IMR-90 (cell line): ENCODE measurements at regions of chr7 and their contacts with region 1.

Region 1: DNA sequence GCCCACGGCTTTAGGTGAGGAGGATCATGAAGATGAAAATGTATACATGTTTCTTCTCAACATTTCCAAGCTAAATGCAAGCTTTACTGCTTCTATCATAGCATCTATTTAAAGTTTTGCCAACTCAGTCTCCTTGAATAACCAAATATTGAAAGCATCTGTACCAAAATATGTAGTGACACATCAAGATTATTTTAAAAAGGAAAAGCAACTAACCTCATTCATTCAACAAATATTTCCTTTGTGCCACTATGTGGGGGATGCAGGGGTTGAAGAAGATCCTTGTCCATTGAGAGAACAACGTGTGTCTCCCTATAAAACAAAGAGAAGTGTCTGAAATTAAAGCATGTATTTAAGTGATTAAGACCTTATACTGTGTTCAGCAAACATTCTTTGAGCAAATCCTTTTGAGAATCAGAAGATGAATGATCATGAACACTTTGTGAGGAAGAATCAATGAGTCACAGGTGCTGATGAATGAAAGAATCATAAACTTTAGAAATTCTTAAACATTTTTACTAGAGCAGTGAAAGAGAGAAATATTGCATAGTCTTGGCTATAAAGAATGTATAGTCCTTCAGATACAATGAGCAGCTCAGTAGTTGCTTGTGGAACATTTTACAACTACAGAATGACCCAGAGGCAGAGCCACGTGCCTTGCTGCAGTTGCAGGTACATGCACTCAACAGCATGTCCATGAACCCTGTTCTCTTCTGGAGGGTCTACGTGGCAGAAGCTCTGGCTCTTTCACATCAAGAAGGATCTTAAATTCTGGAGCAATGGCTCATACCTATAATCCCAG is 13.9 kb downstream of the TAS2R60 start:
- DNase-seq: peak; percentile 67
- ATAC-seq: peak; percentile 69
- H3K4me3 ChIP-seq: no peak overlapping the region
- H3K27ac ChIP-seq: peak overlapping the region; percentile 81
- H3K4me1 ChIP-seq: peaks cover 16% of the 10 kb centered on the region
- H3K27me3 ChIP-seq: no peaks in the 10 kb centered on the region
- CTCF ChIP-seq: no peak
- POLR2A ChIP-seq: no peak
- RAD21 ChIP-seq: no peak

Region 2: DNA sequence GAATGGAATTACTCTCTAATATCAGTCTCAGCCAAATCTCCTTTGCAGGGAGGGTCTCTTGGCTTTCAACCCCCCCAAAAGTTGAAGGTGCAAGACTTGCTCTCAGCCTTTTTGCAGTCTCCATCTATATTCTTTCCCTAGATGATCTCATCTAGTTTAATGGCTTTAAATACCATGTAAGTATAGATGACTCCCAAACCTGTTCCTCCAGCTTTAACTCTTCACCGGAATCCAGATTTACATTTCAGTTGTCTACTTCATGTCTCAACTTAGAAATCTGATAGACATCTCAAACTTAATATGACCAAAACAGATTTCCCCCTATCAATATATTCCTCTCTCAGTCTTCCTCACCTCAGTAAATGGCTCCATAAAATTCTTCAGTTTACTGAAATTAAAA is 10.5 kb after region 1 on chr7:
- CTCF ChIA-PET with region 1: no interaction called
- POLR2A ChIA-PET with region 1: no interaction called
- dilution Hi-C with region 1: no loop called
- in situ Hi-C with region 1: no loop called
- intact Hi-C with region 1: loop called (anchors 2 kb)
- DNase-seq: no peak
- ATAC-seq: no peak
- H3K4me3 ChIP-seq: no peak overlapping the region
- H3K27ac ChIP-seq: no peak overlapping the region
- H3K4me1 ChIP-seq: no peaks in the 10 kb centered on the region
- H3K27me3 ChIP-seq: no peaks in the 10 kb centered on the region
- CTCF ChIP-seq: no peak
- POLR2A ChIP-seq: no peak
- RAD21 ChIP-seq: no peak

Region 3: DNA sequence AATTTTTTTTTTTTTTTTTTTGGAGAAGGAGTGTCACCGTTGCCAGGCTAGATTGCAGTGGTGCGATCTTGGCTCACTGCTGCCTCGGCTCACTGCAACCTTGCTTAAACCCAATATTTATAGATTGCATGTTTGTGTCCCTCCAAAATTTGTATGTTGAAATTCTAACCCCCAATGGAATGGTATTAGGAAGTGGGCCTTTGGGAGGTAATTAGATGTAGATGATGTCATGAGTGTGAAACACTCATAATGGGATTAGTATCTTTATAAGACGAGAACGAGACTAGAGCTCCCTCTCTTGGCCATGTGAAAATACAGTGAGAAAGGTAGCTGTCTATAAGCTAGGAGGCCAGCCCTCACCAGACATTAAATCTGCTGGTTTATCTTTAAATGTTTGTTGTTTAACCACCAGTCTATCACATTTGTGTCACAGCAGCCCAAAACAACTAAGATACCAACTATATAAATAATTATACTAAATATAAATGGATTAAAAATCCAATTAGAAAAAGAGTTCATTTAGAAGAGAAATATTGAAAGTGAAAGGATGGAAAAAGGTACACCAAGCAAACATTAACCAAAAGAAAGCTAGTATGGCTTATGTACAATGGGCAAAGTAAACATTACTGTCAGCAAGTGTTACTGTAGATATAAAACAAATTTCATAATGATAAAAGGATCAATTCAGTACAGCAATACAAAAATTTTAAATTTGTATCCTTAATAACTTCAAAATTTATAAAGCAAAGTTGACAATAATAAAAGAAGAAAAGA is 435.5 kb after region 1 on chr7:
- CTCF ChIA-PET with region 1: no interaction called
- POLR2A ChIA-PET with region 1: no interaction called
- dilution Hi-C with region 1: no loop called
- in situ Hi-C with region 1: no loop called
- intact Hi-C with region 1: no loop called
- DNase-seq: peak; percentile 18
- ATAC-seq: no peak
- H3K4me3 ChIP-seq: no peak overlapping the region
- H3K27ac ChIP-seq: no peak overlapping the region
- H3K4me1 ChIP-seq: no peaks in the 10 kb centered on the region
- H3K27me3 ChIP-seq: no peaks in the 10 kb centered on the region
- CTCF ChIP-seq: peak; percentile 29; the same call in 1 of the 2 replicates
- POLR2A ChIP-seq: no peak
- RAD21 ChIP-seq: peak; percentile 23; the same call in 1 of the 2 replicates